HepG2 (cell line): ENCODE measurements at regions of chr18 and their contacts with region 1.

Region 1: GRCh38 chr18:70172225-70172624 is 33.3 kb downstream of the RTTN start:
- DNase-seq: no peak
- ATAC-seq: no peak
- H3K4me3 ChIP-seq: no peak overlapping the region
- H3K27ac ChIP-seq: no peak overlapping the region
- H3K4me1 ChIP-seq: no peaks in the 10 kb centered on the region; the same call in 1 of the 2 replicates
- H3K27me3 ChIP-seq: no peaks in the 10 kb centered on the region
- CTCF ChIP-seq: 0 out of 2 replicates have a peak, but pooled peaks have one; percentile 13
- EP300 ChIP-seq: no peak
- POLR2A ChIP-seq: no peak
- RAD21 ChIP-seq: no peak

Region 2: GRCh38 chr18:70154591-70155194 is 17.5 kb before region 1 on chr18:
- CTCF ChIA-PET with region 1: no interaction called
- POLR2A ChIA-PET with region 1: interaction called, 3 read pairs
- in situ Hi-C with region 1: no loop called
- intact Hi-C with region 1: loop called (anchors 2 kb)
- DNase-seq: no peak
- ATAC-seq: no peak
- H3K4me3 ChIP-seq: no peak overlapping the region
- H3K27ac ChIP-seq: no peak overlapping the region
- H3K4me1 ChIP-seq: no peaks in the 10 kb centered on the region
- H3K27me3 ChIP-seq: no peaks in the 10 kb centered on the region
- CTCF ChIP-seq: no peak
- EP300 ChIP-seq: no peak
- POLR2A ChIP-seq: no peak
- RAD21 ChIP-seq: no peak

Region 3: DNA sequence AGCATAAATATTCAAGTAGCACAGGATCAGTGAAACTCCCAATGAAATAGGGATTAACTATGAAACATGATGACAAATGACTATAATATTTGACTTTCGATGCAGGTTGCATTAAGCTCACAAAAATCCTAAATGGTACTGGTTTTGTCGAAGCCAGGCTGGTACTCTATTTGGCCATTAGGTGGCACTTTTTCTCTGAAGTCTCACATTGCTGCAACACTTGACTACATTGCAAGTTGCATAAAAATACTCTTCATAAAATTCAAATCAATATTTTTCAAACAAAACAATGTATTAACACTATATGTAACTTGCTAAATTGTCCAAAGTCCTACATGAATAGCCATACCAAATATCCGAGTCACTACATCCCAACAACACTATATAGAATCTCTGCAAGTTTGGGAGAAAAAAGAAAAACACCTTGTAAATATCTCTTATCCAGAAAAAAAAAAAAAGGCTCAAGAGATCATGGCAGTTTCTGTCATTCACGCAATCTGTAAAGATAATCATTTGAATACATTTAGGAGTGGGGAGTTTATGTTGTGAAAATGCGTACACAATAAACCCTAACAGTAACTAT is 23.7 kb after region 1 on chr18:
- CTCF ChIA-PET with region 1: no interaction called
- POLR2A ChIA-PET with region 1: no interaction called
- in situ Hi-C with region 1: no loop called
- intact Hi-C with region 1: no loop called
- DNase-seq: peak; percentile 35
- ATAC-seq: peak; percentile 63
- H3K4me3 ChIP-seq: no peak overlapping the region
- H3K27ac ChIP-seq: no peak overlapping the region
- H3K4me1 ChIP-seq: no peaks in the 10 kb centered on the region
- H3K27me3 ChIP-seq: no peaks in the 10 kb centered on the region
- CTCF ChIP-seq: peak; percentile 76
- EP300 ChIP-seq: no peak
- POLR2A ChIP-seq: no peak
- RAD21 ChIP-seq: peak; percentile 67

Region 4: DNA sequence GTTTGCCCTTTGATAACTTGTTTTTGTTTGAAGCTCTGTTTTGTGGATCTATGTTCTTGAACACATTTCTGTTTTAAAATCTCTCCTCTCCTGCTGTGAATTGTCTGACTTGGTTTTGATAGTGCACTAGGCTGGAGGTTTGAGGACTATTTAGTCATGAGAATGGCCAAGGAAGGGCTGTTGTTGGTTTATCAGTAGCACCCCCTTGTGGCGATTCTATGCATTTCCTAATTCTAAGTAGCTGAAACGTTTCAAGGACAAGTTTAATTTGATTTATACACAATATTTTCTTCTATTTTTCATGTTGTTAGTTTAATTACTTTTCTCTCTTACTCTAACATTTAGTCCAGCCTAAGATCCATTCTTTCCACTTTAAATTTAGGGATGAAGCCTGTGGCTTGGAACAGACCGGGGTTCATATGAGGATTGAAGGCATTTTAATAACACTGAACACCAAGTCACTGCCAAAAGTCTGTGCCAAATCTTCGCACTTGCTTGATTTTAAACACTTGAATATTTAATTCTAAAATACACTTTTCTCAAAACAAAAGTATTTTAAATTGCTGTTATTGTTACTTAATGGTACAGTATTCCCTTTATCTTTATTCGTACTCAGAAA is 282.6 kb after region 1 on chr18:
- CTCF ChIA-PET with region 1: interaction called, 15 read pairs
- POLR2A ChIA-PET with region 1: no interaction called
- in situ Hi-C with region 1: loop called (anchors 5 kb)
- intact Hi-C with region 1: loop called (anchors 1 kb)
- DNase-seq: peak; percentile 60
- ATAC-seq: peak; percentile 47; the same call in 2 of the 3 replicates
- H3K4me3 ChIP-seq: no peak overlapping the region
- H3K27ac ChIP-seq: no peak overlapping the region
- H3K4me1 ChIP-seq: peaks cover 37% of the 10 kb centered on the region
- H3K27me3 ChIP-seq: no peaks in the 10 kb centered on the region
- CTCF ChIP-seq: peak; percentile 74
- EP300 ChIP-seq: no peak
- POLR2A ChIP-seq: no peak
- RAD21 ChIP-seq: peak; percentile 57; the same call in 1 of the 2 replicates